Left lung (tissue), 14 donors: ENCODE measurements at regions of chr6 and their contacts with region 1.

Region 1: GRCh38 chr6:2791124-2791974 is 26.2 kb downstream of the WRNIP1 start:
- DNase-seq: peak in 3 of 4 donors; percentile 45 to 73 (median 73)
- ATAC-seq: peak; percentile 94
- H3K4me3 ChIP-seq: no peak overlapping the region
- H3K27ac ChIP-seq: peak overlapping the region; percentile 64 to 89
- H3K4me1 ChIP-seq: peaks cover 6 to 60% of the 10 kb centered on the region in 2 donors
- H3K27me3 ChIP-seq: no peaks in the 10 kb centered on the region
- CTCF ChIP-seq: peak; percentile 64 to 72

Region 2: GRCh38 chr6:2931970-2932748 is 140.8 kb after region 1 on chr6:
- intact Hi-C with region 1: loop called in 1 of 2 experiments (anchors 5 kb)
- DNase-seq: peak in 3 of 4 donors; percentile 57 to 79 (median 79)
- ATAC-seq: peak; percentile 100
- H3K4me3 ChIP-seq: no peak overlapping the region
- H3K27ac ChIP-seq: no peak overlapping the region
- H3K4me1 ChIP-seq: peaks cover 3 to 8% of the 10 kb centered on the region in 2 donors
- H3K27me3 ChIP-seq: no peaks in the 10 kb centered on the region
- CTCF ChIP-seq: peak; percentile 91 to 96